ENCODE measurements at regions of chr20 and their contacts with region 1.

Region 1: DNA sequence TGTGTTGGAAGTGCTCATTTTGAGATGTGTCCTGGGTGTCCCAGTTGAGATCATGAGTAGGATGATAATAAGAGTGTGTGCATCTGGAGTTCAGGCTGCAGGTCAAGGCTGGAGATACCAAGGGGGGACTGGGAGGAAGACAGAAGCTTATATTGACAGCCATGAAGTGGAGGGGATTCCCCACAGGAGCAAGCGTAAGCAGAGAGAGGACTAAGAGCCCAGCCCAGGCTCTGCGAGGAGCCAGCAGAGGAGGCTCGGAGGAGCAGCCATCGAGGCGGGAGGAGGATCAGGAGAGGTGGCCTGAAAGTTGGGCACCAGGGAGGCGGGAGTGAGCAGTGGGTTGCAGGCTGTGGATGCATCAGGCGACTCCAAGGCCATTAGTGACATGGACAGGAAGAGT is 116.2 kb downstream of the SLC24A3 start:
- DNase-seq: no peak
- H3K4me3 ChIP-seq: no peak overlapping the region
- H3K27ac ChIP-seq: no peak overlapping the region
- H3K4me1 ChIP-seq: no peaks in the 10 kb centered on the region
- H3K27me3 ChIP-seq: no peaks in the 10 kb centered on the region
- CTCF ChIP-seq: no peak
- EP300 ChIP-seq: no peak
- POLR2A ChIP-seq: no peak

Region 2: DNA sequence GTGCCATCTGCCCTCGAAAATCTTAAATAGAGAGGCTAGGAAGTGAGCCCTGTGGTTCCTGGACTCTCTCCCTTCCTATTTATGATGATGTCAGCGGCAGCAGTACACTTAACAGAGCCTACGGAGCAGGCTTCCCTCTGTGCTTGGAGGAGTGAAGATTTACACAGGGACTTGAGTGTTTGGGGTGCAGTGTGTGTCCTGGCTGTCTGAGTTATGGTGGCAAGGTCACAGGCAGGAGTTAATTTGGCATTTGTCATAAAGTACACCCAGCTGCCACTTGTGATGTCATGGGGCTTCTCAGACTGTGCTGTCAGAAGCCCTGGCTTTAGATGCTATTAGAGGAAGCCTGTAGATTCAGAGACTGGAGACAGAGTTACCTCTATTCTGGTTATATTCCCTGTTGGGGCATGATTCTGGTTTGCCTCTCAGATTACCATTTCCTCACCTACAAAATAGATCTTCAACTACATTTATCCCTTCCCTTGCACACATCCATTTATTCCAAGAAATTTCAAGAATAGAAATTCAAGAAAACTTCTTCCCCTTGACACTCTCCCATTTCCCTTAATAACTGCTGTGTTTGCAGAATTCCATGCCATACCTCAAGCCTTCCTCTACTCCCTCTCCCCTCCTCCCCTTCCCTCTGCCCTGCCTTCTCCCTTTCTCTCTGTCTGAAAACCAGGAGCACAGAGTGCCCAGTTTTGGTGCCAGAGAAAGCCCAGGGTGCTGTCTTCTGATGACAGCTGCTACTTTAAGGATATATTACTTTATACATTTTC is 44.1 kb before region 1 on chr20:
- in situ Hi-C with region 1: no loop called
- intact Hi-C with region 1: loop called (anchors 1 kb)
- DNase-seq: no peak
- H3K4me3 ChIP-seq: no peak overlapping the region
- H3K27ac ChIP-seq: peak overlapping the region in 3 of 4 donors; percentile 19 to 50 (median 28)
- H3K4me1 ChIP-seq: peaks cover 0 to 10% (median 3%) of the 10 kb centered on the region in 4 donors
- H3K27me3 ChIP-seq: no peaks in the 10 kb centered on the region
- CTCF ChIP-seq: no peak
- EP300 ChIP-seq: no peak
- POLR2A ChIP-seq: no peak

Region 3: GRCh38 chr20:19583532-19584175 is 255.0 kb after region 1 on chr20:
- in situ Hi-C with region 1: no loop called
- intact Hi-C with region 1: no loop called
- DNase-seq: peak; percentile 70
- H3K4me3 ChIP-seq: no peak overlapping the region
- H3K27ac ChIP-seq: no peak overlapping the region
- H3K4me1 ChIP-seq: no peaks in the 10 kb centered on the region
- H3K27me3 ChIP-seq: no peaks in the 10 kb centered on the region
- CTCF ChIP-seq: peak; percentile 68 to 84 (median 78)
- EP300 ChIP-seq: no peak
- POLR2A ChIP-seq: no peak